IMR-90 (cell line): ENCODE measurements at regions of chr3 and their contacts with region 1.

Region 1: DNA sequence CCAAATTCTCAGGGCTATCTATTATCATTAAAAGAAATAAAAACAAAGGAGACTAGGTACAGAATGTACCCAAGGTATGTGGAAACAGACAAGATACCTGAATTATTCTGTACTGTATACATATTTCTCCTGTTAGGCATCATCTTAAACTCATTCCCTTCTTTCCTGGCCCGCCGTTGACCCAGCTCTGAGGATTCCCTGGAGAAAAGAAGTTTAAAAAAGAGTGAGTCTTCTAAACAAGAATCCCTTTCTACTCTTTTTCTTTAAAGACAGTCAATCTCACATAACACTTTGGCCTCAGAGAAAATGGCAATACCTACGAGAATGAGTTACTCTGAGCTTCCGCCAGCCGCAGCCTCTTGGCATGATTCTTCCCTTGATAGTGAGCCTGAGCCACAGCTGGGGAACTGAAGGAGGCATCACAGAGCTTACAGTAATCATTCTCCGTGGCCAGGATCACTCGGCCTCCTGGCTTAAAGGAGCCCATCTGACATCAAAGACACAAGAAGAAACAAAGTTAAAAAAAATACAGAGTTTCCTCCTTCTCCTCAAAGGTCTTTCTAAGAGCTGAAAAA is 44.2 kb downstream of the ZMAT3 start:
- DNase-seq: peak; percentile 61
- ATAC-seq: peak; percentile 60
- H3K4me3 ChIP-seq: no peak overlapping the region
- H3K27ac ChIP-seq: peak overlapping the region; percentile 38; the same call in 1 of the 2 replicates
- H3K4me1 ChIP-seq: peaks cover 4% of the 10 kb centered on the region; the same call in 1 of the 2 replicates
- H3K27me3 ChIP-seq: no peaks in the 10 kb centered on the region
- CTCF ChIP-seq: 0 out of 2 replicates have a peak, but pooled peaks have one; percentile 2
- POLR2A ChIP-seq: no peak
- RAD21 ChIP-seq: no peak

Region 2: GRCh38 chr3:177102553-177102952 is 1924.9 kb before region 1 on chr3:
- CTCF ChIA-PET with region 1: no interaction called
- POLR2A ChIA-PET with region 1: interaction called, 10 read pairs
- dilution Hi-C with region 1: no loop called
- in situ Hi-C with region 1: no loop called
- intact Hi-C with region 1: no loop called
- DNase-seq: peak; percentile 52
- ATAC-seq: peak; percentile 92
- H3K4me3 ChIP-seq: no peak overlapping the region
- H3K27ac ChIP-seq: no peak overlapping the region
- H3K4me1 ChIP-seq: peaks cover 4% of the 10 kb centered on the region; the same call in 1 of the 2 replicates
- H3K27me3 ChIP-seq: no peaks in the 10 kb centered on the region
- CTCF ChIP-seq: no peak
- POLR2A ChIP-seq: no peak
- RAD21 ChIP-seq: no peak

Region 3: DNA sequence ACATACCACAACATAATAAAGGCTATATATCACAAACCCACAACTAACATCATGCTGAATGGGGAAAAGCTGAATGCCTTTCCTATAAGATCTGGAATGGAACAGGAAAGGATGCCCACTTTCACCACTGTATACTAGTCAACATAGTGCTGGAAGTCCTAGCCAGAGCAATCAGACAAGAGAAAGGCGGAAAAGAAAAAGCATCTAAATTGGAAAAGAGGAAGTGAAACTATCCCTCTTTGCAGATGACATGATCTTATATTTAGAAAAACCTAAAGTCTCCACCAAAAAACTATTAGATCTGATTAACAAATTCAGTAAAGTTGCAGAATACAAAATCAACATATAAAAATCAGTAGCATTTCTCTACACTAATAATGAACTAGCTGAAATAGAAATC is 106.2 kb after region 1 on chr3:
- CTCF ChIA-PET with region 1: no interaction called
- POLR2A ChIA-PET with region 1: no interaction called
- dilution Hi-C with region 1: no loop called
- in situ Hi-C with region 1: no loop called
- intact Hi-C with region 1: no loop called
- DNase-seq: no peak
- ATAC-seq: no peak
- H3K4me3 ChIP-seq: no peak overlapping the region
- H3K27ac ChIP-seq: no peak overlapping the region
- H3K4me1 ChIP-seq: no peaks in the 10 kb centered on the region
- H3K27me3 ChIP-seq: no peaks in the 10 kb centered on the region
- CTCF ChIP-seq: no peak
- POLR2A ChIP-seq: no peak
- RAD21 ChIP-seq: no peak

Region 4: DNA sequence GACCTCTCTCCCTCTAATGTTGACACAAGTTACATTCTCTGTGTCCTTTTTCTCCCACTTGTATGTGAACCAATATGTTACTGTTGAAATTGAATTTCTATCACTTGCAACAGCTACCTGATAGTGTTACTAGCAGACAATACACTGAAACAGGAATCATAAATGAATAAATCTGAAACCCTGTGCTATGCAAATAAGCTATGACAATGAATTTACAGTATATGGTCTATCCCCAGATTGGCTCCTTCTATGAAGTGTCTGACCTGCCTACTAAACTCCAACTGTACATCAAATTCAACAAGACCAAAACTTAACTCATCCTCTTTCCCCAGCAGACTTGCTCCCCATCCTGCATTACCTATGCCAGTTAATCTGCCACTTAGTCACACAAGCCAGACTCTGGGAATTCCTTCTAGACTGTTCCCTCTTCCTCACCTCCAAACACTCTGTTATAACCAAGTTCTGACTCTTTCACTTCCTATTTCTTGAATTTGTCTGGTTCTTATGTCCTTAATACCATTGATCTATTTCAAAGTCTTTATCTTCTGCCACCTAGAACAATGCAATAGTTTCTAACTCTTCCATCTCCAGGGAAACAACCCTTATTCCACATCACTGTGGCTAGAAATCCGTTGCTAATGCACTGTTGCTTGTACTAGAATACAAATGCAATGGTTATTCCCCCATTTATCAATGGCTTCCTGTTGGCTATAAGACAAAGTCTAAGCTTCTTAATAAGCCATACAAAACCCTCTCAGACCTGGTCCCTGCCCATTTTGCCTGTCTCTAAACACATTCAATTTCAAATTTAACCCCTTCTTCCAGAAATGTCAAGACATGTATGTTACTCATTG is 282.0 kb after region 1 on chr3:
- CTCF ChIA-PET with region 1: no interaction called
- POLR2A ChIA-PET with region 1: no interaction called
- dilution Hi-C with region 1: no loop called
- in situ Hi-C with region 1: no loop called
- intact Hi-C with region 1: no loop called
- DNase-seq: no peak
- ATAC-seq: no peak
- H3K4me3 ChIP-seq: no peak overlapping the region
- H3K27ac ChIP-seq: no peak overlapping the region
- H3K4me1 ChIP-seq: no peaks in the 10 kb centered on the region
- H3K27me3 ChIP-seq: no peaks in the 10 kb centered on the region
- CTCF ChIP-seq: no peak
- POLR2A ChIP-seq: no peak
- RAD21 ChIP-seq: no peak